ENCODE measurements at regions of chr13 and their contacts with region 1.

Region 1: DNA sequence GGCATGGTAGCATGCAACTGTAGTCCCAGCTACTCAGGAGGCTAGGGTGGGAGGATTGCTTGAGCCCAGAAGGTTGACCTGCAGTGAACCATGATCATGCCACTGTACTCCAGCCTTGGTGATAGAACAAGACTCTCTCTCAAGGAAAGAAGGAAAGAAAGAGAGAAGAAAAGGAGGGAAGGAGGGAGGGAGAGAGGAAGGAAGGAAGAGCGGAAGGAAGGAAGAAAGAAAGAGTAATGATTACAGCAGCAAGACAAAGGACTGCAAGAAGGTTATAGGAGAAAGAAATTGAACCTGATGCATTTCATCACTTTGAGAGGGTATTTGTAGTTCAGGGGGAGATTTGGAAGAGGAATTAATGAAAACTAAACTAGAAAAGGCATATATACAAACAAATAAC is 155.7 kb downstream of the LACC1 start:
- DNase-seq: no peak
- H3K4me3 ChIP-seq: no peak overlapping the region
- H3K27ac ChIP-seq: no peak overlapping the region
- H3K4me1 ChIP-seq: peaks cover 0 to 10% (median 5%) of the 10 kb centered on the region in 4 donors
- H3K27me3 ChIP-seq: no peaks in the 10 kb centered on the region
- CTCF ChIP-seq: no peak
- EP300 ChIP-seq: no peak
- POLR2A ChIP-seq: no peak

Region 2: DNA sequence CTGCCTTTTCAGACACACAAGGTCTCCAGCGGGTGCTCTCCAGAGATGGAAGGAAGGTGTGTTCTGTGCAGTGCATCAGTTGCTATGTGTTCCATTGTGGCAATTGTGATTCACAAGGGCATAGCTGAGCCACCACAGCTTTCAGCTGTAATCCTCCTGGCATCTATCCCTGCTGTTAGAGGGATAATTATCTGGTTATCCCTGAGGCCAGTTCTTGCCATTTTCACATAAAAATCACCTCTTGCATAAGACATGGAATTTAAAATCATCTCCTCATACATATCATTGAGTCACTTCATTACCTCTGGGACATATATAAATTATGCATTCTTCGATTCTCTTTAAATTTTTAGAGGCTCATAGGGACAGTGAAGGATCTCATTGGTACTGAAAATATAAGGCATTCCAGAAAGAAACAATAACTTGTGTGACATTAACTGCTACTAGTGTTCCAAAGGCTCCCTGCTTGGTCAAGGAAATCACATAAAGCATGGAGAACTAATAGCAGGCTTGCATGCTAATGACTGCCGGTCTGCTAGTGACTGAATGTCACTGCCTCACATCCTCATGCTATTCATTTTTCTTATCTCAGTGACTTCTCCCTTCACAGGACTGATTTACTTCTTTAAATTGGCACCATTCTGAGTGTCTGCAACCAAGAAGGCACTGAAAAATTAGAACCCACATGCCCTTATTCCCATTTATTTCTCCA is 462.6 kb before region 1 on chr13:
- in situ Hi-C with region 1: no loop called
- intact Hi-C with region 1: no loop called
- DNase-seq: no peak
- H3K4me3 ChIP-seq: no peak overlapping the region
- H3K27ac ChIP-seq: peak overlapping the region in 1 of 4 donors; percentile 6
- H3K4me1 ChIP-seq: peaks cover 0 to 19% (median 1%) of the 10 kb centered on the region in 4 donors
- H3K27me3 ChIP-seq: no peaks in the 10 kb centered on the region
- CTCF ChIP-seq: no peak
- EP300 ChIP-seq: no peak
- POLR2A ChIP-seq: no peak

Region 3: DNA sequence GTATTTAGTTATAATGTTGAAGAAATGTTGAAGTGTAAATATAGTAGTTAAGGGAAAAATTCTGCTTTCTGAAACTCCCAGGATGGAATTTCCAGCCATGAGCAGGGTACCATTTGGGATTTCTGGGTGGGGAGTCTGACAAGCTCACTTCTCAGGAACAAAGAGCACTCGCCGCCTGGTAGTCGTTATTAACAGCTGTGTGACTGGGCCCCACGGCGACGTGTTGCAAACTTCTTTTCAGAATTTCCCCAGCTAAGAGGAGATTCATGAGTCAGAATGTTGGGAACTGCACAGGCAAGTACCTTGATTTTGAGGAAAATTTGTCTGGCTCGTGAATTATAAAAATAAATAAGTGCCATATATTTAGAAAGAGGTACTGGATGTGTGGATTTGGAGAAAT is 52.0 kb before region 1 on chr13:
- in situ Hi-C with region 1: no loop called
- intact Hi-C with region 1: loop called (anchors 2 kb)
- DNase-seq: no peak
- H3K4me3 ChIP-seq: no peak overlapping the region
- H3K27ac ChIP-seq: no peak overlapping the region
- H3K4me1 ChIP-seq: peaks cover 0 to 3% (median 0%) of the 10 kb centered on the region in 4 donors
- H3K27me3 ChIP-seq: peaks cover 1% of the 10 kb centered on the region
- CTCF ChIP-seq: no peak
- EP300 ChIP-seq: no peak
- POLR2A ChIP-seq: no peak

Region 4: GRCh38 chr13:44293908-44294735 is 258.7 kb after region 1 on chr13:
- in situ Hi-C with region 1: no loop called
- intact Hi-C with region 1: no loop called
- DNase-seq: no peak
- H3K4me3 ChIP-seq: no peak overlapping the region
- H3K27ac ChIP-seq: peak overlapping the region; percentile 68 to 82 (median 76)
- H3K4me1 ChIP-seq: peaks cover 0 to 25% (median 8%) of the 10 kb centered on the region in 4 donors
- H3K27me3 ChIP-seq: no peaks in the 10 kb centered on the region
- CTCF ChIP-seq: no peak
- EP300 ChIP-seq: no peak
- POLR2A ChIP-seq: no peak